ENCODE measurements at regions of chr14 and their contacts with region 1.

Region 1: DNA sequence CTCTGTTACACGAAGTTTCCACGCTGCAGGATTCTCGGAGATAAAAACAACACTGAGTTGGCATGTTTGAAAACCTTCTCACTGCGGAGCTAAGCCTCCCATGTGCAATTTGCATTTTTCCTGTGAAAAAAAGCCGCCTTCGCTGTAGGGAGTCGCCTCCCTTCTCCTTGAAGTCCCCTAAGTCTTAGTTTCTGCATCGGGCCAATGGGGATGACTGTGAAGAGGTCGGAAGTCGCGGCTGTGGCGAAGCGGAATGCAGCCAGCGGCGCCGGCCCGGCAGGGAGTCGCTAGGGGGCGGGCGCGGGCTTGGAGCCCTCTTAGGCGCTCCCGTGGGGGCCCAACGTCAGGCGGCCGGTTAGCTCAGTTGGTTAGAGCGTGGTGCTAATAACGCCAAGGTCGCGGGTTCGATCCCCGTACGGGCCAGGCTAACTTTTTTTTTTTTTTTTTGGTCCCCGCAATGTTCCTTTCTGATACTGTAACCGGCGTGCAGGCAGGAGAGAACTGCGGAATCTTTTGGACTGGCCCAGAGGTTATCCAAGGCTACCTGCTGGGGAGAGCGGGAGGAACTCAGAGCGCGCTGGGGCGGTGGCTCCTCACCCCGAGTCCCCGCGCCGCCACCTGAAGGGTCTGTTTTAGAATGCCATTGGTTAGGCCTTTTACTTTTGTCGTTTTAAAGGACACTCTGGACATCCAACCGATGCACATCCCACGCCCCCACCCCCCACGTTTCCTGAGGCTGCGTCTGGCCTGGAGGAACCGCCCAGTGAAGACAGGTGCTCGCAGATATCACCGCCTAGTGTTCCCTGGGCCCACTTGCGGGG is 2.6 kb upstream of the ZNF839 start:
- DNase-seq: peak; percentile 92 to 98 (median 97)
- ATAC-seq: peak; percentile 84 to 88
- H3K4me3 ChIP-seq: peak overlapping the region; percentile 58
- H3K27ac ChIP-seq: peak overlapping the region; percentile 98
- H3K4me1 ChIP-seq: peaks cover 4% of the 10 kb centered on the region
- H3K27me3 ChIP-seq: no peaks in the 10 kb centered on the region

Region 2: DNA sequence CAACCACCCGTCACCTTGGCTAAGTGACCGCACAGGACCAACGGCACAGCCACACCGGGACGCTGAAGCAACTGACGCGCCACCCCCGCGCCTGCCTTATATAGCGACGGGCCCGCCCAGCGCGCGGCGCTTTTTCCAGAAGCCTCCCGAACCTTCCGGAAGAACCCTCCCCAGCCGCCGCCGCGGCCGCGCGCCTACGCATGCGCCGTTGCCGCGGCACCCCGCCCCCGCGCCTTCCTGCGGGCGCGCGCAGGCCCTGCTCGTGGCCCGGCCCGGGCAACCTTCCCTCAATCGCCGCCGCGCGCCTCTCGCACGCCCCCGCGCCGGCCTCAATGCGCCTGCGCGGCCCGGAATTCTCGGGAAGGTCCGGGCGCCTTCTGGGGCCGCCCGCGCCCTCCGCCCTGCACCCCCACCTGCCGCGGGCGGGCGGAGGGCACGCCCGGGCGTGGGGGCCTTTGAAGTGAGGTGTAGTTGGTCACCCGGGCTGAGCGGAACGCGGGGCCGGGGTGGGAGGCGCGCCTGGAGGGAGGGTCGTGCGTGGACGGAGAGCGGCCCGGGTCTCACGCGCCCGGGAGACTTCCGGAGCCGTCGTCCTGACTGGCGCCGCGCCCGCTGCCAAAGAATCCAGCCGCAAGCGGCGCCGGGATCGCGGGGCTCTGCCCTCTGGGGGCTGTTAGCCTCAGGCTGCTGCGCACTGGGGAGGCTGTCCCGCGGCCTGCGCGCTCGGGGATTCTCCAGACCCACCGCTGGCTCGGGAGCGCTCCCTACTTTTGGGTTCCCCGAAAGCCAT is 229.8 kb before region 1 on chr14 and contains the start of gene HSP90AA1:
- intact Hi-C with region 1: loop called in 1 of 4 experiments (anchors 10 kb)
- DNase-seq: peak; percentile 95 to 98 (median 97)
- ATAC-seq: peak; percentile 87 to 90
- H3K4me3 ChIP-seq: peak within 1 kb of the TSS; percentile 100
- H3K27ac ChIP-seq: peak within 1 kb of the TSS; percentile 96
- H3K4me1 ChIP-seq: peaks cover 4% of the 10 kb centered on the region
- H3K27me3 ChIP-seq: no peaks in the 10 kb centered on the region
- total RNA-seq, gene HSP90AA1: 381 to 731 (median 541) TPM

Region 3: DNA sequence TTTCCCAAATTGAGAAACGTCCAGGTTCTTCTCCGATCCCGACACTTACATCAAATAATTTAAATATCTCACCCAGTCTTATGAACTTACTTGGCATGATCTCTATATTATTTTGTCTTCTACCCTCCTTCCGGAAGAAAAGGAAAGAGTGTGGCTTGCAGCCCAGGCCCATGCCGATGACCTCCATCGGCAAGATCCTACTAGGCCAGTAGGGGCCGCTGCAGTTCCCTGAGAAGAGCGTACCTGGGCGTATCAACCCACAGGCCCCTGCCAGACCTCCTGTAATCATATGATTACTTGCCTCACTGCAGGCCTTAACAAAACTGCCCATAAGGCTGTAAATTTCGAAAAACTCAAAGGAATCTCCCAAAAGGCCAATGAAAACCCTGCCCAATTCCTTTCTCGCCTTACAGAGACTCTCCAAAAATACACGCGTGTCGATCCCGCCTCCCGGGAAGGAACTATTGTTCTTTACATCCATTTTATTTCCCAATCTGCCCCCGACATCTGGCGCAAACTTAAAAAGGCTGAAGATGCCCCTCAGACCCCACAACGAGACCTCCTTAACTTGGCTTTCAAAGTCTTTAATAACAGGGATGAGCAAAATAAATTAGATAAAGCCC is 81.6 kb before region 1 on chr14:
- intact Hi-C with region 1: loop called (anchors 2 to 5 kb)
- DNase-seq: peak; percentile 89 to 96 (median 92)
- ATAC-seq: peak; percentile 92 to 94
- H3K4me3 ChIP-seq: peak overlapping the region; percentile 4
- H3K27ac ChIP-seq: peak overlapping the region; percentile 0
- H3K4me1 ChIP-seq: no peaks in the 10 kb centered on the region
- H3K27me3 ChIP-seq: no peaks in the 10 kb centered on the region